AG04449 (cell line): ENCODE measurements at regions of chr13 and their contacts with region 1.

Region 1: DNA sequence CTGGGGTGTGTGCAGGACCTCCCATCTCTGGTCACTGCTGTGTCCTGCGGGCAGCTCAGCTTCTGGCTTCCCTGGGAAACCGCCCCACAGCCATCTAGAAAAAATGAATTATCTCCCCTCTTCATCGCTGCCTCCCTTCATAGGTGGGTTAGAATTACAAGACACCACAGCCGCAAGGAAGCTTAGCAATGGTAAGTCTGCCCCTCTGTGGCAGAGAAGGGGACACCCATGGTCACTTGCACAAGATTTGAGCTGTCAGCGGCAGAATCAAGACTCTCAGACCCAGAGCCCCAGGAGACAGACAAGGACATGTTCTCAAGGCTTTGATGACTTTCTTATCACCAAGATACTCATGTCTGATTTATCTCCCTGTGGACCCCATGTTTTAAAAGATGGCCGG is 110.8 kb upstream of the PABPC3 start:
- DNase-seq: no peak
- H3K4me3 ChIP-seq: no peak overlapping the region
- CTCF ChIP-seq: no peak

Region 2: DNA sequence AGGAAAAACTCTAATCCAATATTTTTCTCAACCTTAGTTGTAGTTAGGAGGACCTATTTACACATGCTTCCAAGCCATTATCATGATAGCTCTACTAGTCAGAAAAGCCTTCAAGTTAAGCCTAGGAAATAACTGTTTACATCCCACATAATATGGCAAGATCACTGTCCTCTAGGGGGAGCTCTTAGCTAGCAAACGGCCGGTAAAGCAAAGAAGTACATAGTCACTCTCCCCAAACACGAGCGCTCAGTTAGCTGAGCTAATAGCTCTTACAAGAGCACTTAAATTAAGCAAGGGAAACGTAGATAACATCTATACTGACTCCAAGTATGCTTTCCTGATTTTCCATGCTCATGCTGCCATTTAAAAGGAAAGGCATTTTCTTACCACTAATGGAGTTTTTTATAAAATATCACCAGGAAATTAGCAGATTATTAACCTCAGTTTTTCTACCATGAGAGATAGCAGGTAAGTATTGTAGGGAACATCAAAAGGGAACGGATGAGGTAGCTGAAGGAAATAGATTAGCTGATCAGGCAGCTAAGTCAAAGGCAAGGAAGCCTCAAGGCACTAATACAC is 10.2 kb after region 1 on chr13:
- CTCF ChIA-PET with region 1: interaction called, 16 read pairs
- POLR2A ChIA-PET with region 1: no interaction called
- DNase-seq: peak; percentile 45
- H3K4me3 ChIP-seq: no peak overlapping the region
- CTCF ChIP-seq: peak; percentile 78